Transverse colon (tissue), 4 donors: ENCODE measurements at regions of chr1 and their contacts with region 1.

Region 1: GRCh38 chr1:188363943-188364342 is 1535.2 kb downstream of the PLA2G4A start:
- DNase-seq: no peak
- H3K4me3 ChIP-seq: no peak overlapping the region
- H3K27ac ChIP-seq: no peak overlapping the region
- H3K4me1 ChIP-seq: no peaks in the 10 kb centered on the region
- H3K27me3 ChIP-seq: no peaks in the 10 kb centered on the region
- CTCF ChIP-seq: no peak
- EP300 ChIP-seq: no peak
- POLR2A ChIP-seq: no peak

Region 2: GRCh38 chr1:188027613-188028012 is 336.3 kb before region 1 on chr1:
- in situ Hi-C with region 1: no loop called
- intact Hi-C with region 1: loop called (anchors 5 kb)
- DNase-seq: no peak
- H3K4me3 ChIP-seq: no peak overlapping the region
- H3K27ac ChIP-seq: no peak overlapping the region
- H3K4me1 ChIP-seq: no peaks in the 10 kb centered on the region
- H3K27me3 ChIP-seq: no peaks in the 10 kb centered on the region
- CTCF ChIP-seq: no peak
- EP300 ChIP-seq: no peak
- POLR2A ChIP-seq: no peak

Region 3: DNA sequence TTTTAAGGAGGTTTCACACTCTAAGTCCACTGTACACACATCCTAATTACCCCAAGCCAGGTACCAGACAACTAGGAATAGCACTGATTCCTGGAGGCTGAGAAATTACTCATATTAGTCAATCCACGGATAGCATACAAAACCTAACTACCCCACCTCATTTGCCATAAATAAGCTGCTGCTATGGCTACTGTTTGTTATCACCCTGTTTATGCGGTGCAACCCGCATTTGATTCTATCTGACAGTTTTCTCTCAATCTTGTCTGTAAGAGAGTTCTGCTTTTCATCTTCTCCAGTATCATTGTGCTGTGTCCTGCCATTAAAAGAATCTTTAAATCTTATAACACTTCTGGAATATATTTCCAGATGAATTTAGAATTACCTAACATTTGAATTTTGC is 38.7 kb before region 1 on chr1:
- in situ Hi-C with region 1: no loop called
- intact Hi-C with region 1: no loop called
- DNase-seq: no peak
- H3K4me3 ChIP-seq: no peak overlapping the region
- H3K27ac ChIP-seq: no peak overlapping the region
- H3K4me1 ChIP-seq: no peaks in the 10 kb centered on the region
- H3K27me3 ChIP-seq: no peaks in the 10 kb centered on the region
- CTCF ChIP-seq: no peak
- EP300 ChIP-seq: no peak
- POLR2A ChIP-seq: no peak